ENCODE measurements at regions of chr9 and their contacts with region 1.

Region 1: DNA sequence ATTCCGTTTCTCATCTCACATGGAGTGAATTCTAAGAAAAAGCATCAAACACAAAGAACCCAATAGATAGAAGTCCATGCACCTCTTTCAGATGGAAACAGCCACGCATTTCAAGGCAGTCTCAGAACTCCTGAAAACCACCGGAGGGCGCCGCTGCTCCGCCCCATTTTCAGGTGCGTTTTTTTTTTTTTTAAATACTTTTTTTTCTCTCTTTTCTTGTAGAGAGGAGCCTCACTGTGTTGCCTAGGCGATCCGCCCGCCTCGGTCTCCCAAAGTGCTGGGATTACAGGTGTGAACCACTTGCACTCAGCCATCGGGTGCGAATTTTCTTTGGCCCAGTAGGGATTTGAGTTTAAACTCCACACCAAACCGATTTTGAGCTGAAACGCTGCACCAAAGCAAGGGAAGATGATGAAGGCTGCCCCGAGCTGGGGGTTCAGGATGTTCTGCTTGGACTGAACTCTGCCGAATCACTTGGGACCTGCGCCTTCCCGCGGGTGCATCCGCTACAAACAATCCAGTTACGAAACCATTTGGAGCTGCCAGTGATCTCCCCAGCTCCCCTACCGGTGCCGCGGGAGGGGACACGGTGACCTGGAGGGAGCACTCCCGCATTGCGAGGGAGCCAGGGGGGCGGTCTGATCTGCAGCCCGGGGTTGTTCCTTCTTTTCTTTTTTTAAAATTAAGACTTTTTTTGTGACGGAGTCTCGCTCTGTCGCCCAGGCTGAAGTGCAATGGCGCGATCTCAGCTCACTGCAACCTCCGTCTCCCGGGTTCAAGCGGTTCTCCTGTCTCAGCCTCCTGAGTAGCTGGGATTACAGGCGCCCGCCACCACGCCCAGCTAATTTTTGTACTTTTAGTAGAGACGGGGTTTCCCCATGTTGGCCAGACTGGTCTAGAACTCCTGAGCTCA is 1.4 kb downstream of the PTGR1 start:
- DNase-seq: peak; percentile 60 to 80
- H3K4me3 ChIP-seq: peak overlapping the region; percentile 75 to 81
- H3K27ac ChIP-seq: peak overlapping the region; percentile 82
- H3K4me1 ChIP-seq: peaks cover 0 to 18% (median 5%) of the 10 kb centered on the region in 4 donors
- H3K27me3 ChIP-seq: no peaks in the 10 kb centered on the region
- CTCF ChIP-seq: peak; percentile 22 to 64

Region 2: DNA sequence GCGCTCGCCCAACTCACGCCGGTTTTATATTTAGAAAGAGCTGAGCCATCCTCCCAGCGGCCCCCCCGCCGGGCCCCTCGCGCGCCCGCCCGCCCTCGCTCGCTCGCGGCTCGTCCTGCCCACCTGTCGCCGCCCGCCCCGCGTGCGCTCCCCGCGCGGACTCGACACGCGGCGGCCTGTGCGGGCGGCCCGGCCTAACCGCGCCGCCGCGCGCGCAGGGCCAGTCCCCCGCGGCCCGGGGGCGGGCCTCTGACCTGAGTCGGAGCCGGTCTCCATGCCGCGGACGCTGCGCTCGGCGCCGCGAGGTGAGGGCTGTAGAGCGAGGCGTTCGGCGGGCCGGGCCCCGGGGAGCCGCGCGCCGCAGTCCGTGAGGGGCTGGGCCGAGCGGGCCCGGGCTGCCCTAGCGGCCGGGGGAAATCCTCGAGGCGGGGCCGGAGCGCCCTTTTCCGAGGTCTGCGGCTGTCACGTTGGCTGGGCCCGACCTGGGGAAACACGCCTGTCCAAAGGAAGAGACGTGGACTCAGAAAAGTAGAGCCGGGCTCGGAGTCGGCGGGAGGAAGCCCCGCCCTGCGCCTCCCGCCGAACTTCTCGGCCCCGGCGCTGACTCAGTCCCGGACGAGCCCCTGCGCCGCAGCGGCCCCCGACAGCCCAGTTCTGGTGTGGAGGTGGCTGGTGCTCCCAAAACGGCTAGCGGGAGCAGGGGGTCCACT is 114.1 kb before region 1 on chr9 and contains the start of gene ECPAS:
- intact Hi-C with region 1: loop called (anchors 10 kb)
- DNase-seq: peak; percentile 72 to 86
- H3K4me3 ChIP-seq: peak within 1 kb of the TSS; percentile 76 to 95
- H3K27ac ChIP-seq: peak within 1 kb of the TSS; percentile 98 to 99
- H3K4me1 ChIP-seq: peaks cover 0 to 25% (median 15%) of the 10 kb centered on the region in 4 donors
- H3K27me3 ChIP-seq: no peaks in the 10 kb centered on the region
- CTCF ChIP-seq: peak in 1 of 2 experiments; percentile 2

Region 3: GRCh38 chr9:111661150-111661801 is 63.2 kb after region 1 on chr9 and contains the start of gene GNG10:
- intact Hi-C with region 1: loop called (anchors 1 kb)
- DNase-seq: peak; percentile 43 to 77
- H3K4me3 ChIP-seq: peak within 1 kb of the TSS; percentile 81 to 87
- H3K27ac ChIP-seq: peak within 1 kb of the TSS; percentile 71 to 76
- H3K4me1 ChIP-seq: peaks cover 0 to 15% (median 10%) of the 10 kb centered on the region in 4 donors
- H3K27me3 ChIP-seq: no peaks in the 10 kb centered on the region
- CTCF ChIP-seq: no peak

Region 4: DNA sequence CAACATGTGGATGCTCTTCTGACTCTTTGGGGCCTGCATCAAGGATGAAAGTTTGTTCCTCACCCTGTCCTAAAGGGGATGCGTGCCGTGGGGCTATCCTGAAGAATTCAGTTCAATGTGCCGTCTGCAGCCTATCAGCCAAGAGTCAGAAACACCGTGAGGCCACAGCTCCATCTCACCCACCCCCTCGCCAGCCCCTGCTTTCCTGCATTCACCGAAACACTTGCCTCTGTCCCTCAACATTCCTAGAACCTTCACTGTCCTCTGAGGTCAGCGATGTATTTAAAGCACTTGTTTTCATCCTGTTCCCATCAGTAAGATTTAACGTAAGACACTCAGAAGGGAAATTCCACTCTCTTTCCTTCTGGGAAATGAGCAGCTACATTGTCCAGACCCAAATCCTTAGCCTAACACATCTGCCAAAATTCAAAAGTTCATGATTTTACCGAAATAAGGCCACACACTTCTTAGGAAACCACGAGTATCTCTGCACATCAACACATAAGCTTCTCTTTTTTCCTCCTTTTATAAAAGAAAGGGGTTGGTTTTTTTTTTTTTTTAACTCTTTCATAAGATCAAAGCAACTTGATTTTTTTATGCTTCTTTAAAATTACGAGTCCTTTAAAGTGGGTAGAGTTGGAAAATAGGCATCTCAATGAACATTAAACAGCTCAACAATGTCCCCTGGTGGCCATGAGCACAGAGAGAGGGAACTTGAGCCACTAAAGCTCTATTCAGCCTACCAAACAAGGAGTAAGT is 476.4 kb after region 1 on chr9:
- intact Hi-C with region 1: loop called (anchors 5 kb)
- DNase-seq: peak in 1 of 2 donors; percentile 62
- H3K4me3 ChIP-seq: no peak overlapping the region
- H3K27ac ChIP-seq: peak overlapping the region; percentile 9 to 17
- H3K4me1 ChIP-seq: peaks cover 0 to 13% (median 0%) of the 10 kb centered on the region in 4 donors
- H3K27me3 ChIP-seq: no peaks in the 10 kb centered on the region
- CTCF ChIP-seq: peak; percentile 89 to 96

Measured in tibial artery (tissue), 4 donors.